ENCODE measurements at regions of chr10 and their contacts with region 1.

Region 1: DNA sequence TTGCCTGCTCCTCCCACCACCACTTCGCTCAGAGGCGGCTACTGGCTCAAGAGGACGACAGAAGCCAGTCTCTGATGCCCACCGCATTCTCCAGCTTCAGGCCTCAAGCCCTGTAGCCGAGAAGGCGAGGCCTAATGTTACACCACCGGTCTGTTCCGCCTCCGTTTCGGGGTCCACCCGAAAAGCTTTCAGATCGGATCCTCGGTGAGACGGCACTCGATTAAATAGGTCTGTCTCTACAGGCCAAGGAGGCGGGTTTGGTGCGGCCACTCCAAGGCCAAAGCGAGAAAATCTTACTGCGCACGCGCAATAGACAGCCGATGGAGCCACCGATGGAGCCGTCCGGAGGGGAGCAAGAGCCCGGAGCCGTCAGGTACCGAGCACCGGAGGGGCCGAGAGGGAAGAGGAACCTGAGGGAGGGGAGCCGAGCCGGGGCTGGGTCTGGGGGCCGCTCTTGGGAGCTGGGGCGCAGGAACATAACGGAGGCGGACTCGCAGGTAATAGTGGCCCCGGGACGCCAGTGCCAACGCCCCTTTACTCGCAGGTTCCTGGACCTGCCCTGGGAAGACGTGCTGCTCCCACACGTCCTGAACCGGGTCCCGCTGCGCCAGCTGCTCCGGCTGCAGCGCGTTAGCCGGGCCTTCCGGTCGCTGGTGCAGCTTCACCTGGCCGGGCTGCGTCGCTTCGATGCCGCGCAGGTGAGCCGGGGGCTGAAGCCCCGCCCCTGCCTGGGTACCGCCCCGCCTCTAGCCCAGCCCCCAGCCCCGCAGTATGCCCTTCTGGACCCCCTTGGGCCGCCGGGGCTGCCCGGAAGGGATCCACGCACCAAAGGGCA is at the start of gene FBXL15:
- DNase-seq: peak; percentile 98
- ATAC-seq: peak; percentile 78
- H3K4me3 ChIP-seq: peak within 1 kb of the TSS; percentile 63 to 92 (median 89)
- H3K4me3 Mint-ChIP-seq: peak within 1 kb of the TSS; percentile 99
- H3K27ac ChIP-seq: peak within 1 kb of the TSS; percentile 39 to 62
- H3K27ac Mint-ChIP-seq: peak within 1 kb of the TSS; percentile 99
- H3K4me1 ChIP-seq: peaks cover 32 to 34% of the 10 kb centered on the region in 2 donors
- H3K4me1 Mint-ChIP-seq: peaks cover 38% of the 10 kb centered on the region
- H3K27me3 ChIP-seq: peaks cover 0 to 33% (median 21%) of the 10 kb centered on the region in 4 experiments
- H3K27me3 Mint-ChIP-seq: peaks cover 16% of the 10 kb centered on the region
- CTCF ChIP-seq: no peak
- total RNA-seq, gene FBXL15: 15.5 and 17.0 TPM in 2 replicates

Region 2: DNA sequence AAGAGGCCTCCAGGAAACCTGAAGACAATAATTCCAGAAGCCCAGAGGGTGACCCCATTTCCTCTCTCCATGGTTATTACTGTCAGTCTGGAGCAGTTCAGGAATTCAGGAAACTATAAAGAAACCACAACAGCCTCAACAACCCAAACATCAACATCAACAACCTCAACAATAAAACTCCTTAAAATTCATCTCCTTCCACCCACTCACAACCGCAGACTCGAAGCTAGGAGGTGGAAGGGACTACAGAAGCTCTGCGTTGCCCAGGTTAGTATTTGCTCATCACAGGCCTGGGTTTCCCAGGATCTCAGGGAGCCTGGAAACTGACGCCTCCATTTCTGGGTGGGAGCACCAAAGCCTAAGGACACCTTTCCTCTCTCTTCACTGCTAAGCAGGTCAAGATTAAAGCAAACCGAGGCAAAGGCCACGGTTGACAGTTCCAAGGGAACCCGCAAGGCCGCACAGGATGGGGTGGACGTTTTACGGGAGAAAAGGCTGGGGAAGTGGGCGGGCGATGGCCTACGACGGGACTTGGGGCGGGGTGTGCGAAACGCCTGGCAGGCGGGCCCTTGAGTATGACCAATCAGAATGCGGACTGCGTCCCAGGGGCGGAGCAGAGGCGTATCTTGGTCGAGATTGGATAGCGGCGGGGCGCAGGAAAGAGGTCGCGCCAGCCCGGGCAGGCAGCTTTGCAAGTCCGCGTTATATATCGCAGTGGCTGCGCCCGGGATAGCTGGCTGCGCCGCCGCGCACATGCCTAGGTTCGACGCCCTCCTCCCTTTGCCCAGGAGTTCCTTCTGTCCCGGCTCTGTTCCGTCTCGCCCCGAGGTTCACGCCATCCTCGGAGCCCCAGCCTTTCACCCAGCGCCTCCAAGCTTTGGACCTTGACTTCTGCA is 195.1 kb before region 1 on chr10 and contains the start of gene ELOVL3:
- CTCF ChIA-PET with region 1: interaction called, 46 read pairs
- POLR2A ChIA-PET with region 1: no interaction called
- intact Hi-C with region 1: loop called (anchors 1 kb)
- DNase-seq: peak; percentile 85
- ATAC-seq: peak; percentile 89
- H3K4me3 ChIP-seq: peak within 1 kb of the TSS in 4 of 5 experiments; percentile 16 to 53 (median 36)
- H3K4me3 Mint-ChIP-seq: peak within 1 kb of the TSS; percentile 84
- H3K27ac ChIP-seq: no peak within 1 kb of the TSS
- H3K27ac Mint-ChIP-seq: no peak within 1 kb of the TSS
- H3K4me1 ChIP-seq: peaks cover 21 to 26% of the 10 kb centered on the region in 2 donors
- H3K4me1 Mint-ChIP-seq: peaks cover 25% of the 10 kb centered on the region
- H3K27me3 ChIP-seq: peaks cover 0 to 53% (median 36%) of the 10 kb centered on the region in 4 experiments
- H3K27me3 Mint-ChIP-seq: peaks cover 67% of the 10 kb centered on the region
- CTCF ChIP-seq: no peak
- total RNA-seq, gene ELOVL3: not detected in 2 replicates

Region 3: GRCh38 chr10:102368072-102368471 is 53.0 kb before region 1 on chr10:
- CTCF ChIA-PET with region 1: no interaction called
- POLR2A ChIA-PET with region 1: no interaction called
- intact Hi-C with region 1: no loop called
- DNase-seq: no peak
- ATAC-seq: no peak
- H3K4me3 ChIP-seq: no peak overlapping the region
- H3K4me3 Mint-ChIP-seq: no peak overlapping the region
- H3K27ac ChIP-seq: no peak overlapping the region
- H3K27ac Mint-ChIP-seq: no peak overlapping the region
- H3K4me1 ChIP-seq: no peaks in the 10 kb centered on the region
- H3K4me1 Mint-ChIP-seq: no peaks in the 10 kb centered on the region
- H3K27me3 ChIP-seq: no peaks in the 10 kb centered on the region
- H3K27me3 Mint-ChIP-seq: no peaks in the 10 kb centered on the region
- CTCF ChIP-seq: no peak

Region 4: DNA sequence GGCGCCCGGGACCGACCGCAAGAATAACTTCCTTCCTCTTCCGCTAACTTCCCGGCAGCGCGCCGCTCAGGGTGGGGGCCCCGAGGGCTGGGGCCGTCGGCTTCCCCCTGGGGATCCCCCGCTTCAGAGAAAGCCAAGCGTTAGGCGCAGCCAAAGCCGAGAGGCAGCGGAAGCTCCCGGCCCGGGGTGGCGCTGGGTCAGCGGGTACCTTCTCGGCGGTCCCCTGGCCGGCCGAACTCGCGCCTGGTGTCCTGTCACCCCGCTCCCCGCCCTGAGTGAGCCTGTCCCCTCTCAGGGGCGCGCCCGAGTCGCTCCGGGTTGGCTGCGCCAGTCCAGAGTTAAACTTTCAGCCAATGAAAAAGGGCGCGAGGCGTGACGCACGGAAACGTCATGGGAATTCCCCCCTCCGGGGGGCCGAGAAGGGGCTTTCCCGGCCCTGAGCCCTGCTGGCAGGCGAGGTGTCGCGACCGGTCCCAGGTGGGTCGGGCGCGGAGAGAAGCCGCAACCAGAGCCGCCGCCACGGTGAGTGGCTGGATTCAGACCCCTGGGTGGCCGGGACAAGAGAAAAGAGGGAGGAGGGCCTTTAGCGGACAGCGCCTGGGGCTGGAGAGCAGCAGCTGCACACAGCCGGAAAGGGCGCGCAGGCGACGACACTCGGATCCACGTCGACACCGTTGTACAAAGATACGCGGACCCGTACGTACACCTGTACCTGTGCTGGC is 26.8 kb before region 1 on chr10:
- CTCF ChIA-PET with region 1: interaction called, 108 read pairs
- POLR2A ChIA-PET with region 1: interaction called, 38 read pairs
- intact Hi-C with region 1: loop called (anchors 1 kb)
- DNase-seq: peak; percentile 100
- ATAC-seq: peak; percentile 76
- H3K4me3 ChIP-seq: peak overlapping the region; percentile 86 to 100 (median 99)
- H3K4me3 Mint-ChIP-seq: peak overlapping the region; percentile 95
- H3K27ac ChIP-seq: peak overlapping the region; percentile 98 to 100
- H3K27ac Mint-ChIP-seq: peak overlapping the region; percentile 99
- H3K4me1 ChIP-seq: peaks cover 35 to 44% of the 10 kb centered on the region in 2 donors
- H3K4me1 Mint-ChIP-seq: peaks cover 41% of the 10 kb centered on the region
- H3K27me3 ChIP-seq: no peaks in the 10 kb centered on the region
- H3K27me3 Mint-ChIP-seq: no peaks in the 10 kb centered on the region
- CTCF ChIP-seq: peak; percentile 38

Region 5: GRCh38 chr10:102432162-102432950 is 11.3 kb after region 1 on chr10 and contains the start of gene CUEDC2:
- CTCF ChIA-PET with region 1: interaction called, 22 read pairs
- POLR2A ChIA-PET with region 1: interaction called, 32 read pairs
- intact Hi-C with region 1: loop called (anchors 1 kb)
- DNase-seq: peak; percentile 96
- ATAC-seq: peak; percentile 98
- H3K4me3 ChIP-seq: peak within 1 kb of the TSS; percentile 54 to 93 (median 90)
- H3K4me3 Mint-ChIP-seq: peak within 1 kb of the TSS; percentile 96
- H3K27ac ChIP-seq: peak within 1 kb of the TSS; percentile 28 to 75
- H3K27ac Mint-ChIP-seq: peak within 1 kb of the TSS; percentile 91
- H3K4me1 ChIP-seq: peaks cover 26 to 42% of the 10 kb centered on the region in 2 donors
- H3K4me1 Mint-ChIP-seq: peaks cover 37% of the 10 kb centered on the region
- H3K27me3 ChIP-seq: no peaks in the 10 kb centered on the region
- H3K27me3 Mint-ChIP-seq: no peaks in the 10 kb centered on the region
- CTCF ChIP-seq: no peak
- total RNA-seq, gene CUEDC2: 35.6 and 37.0 TPM in 2 replicates

Region 6: GRCh38 chr10:102476466-102477141 is 55.6 kb after region 1 on chr10:
- CTCF ChIA-PET with region 1: interaction called, 8 read pairs
- POLR2A ChIA-PET with region 1: no interaction called
- intact Hi-C with region 1: loop called (anchors 1 kb)
- DNase-seq: no peak
- ATAC-seq: no peak
- H3K4me3 ChIP-seq: no peak overlapping the region
- H3K4me3 Mint-ChIP-seq: no peak overlapping the region
- H3K27ac ChIP-seq: no peak overlapping the region
- H3K27ac Mint-ChIP-seq: no peak overlapping the region
- H3K4me1 ChIP-seq: peaks cover 0 to 7% of the 10 kb centered on the region in 2 donors
- H3K4me1 Mint-ChIP-seq: peaks cover 7% of the 10 kb centered on the region
- H3K27me3 ChIP-seq: no peaks in the 10 kb centered on the region
- H3K27me3 Mint-ChIP-seq: no peaks in the 10 kb centered on the region
- CTCF ChIP-seq: no peak

Region 7: GRCh38 chr10:102546606-102547320 is 125.7 kb after region 1 on chr10:
- CTCF ChIA-PET with region 1: no interaction called
- POLR2A ChIA-PET with region 1: no interaction called
- intact Hi-C with region 1: no loop called
- DNase-seq: no peak
- ATAC-seq: no peak
- H3K4me3 ChIP-seq: no peak overlapping the region
- H3K4me3 Mint-ChIP-seq: no peak overlapping the region
- H3K27ac ChIP-seq: no peak overlapping the region
- H3K27ac Mint-ChIP-seq: no peak overlapping the region
- H3K4me1 ChIP-seq: no peaks in the 10 kb centered on the region
- H3K4me1 Mint-ChIP-seq: peaks cover 7% of the 10 kb centered on the region
- H3K27me3 ChIP-seq: no peaks in the 10 kb centered on the region
- H3K27me3 Mint-ChIP-seq: no peaks in the 10 kb centered on the region
- CTCF ChIP-seq: no peak